GM10248 (cell line): ENCODE measurements at regions of chr1 and their contacts with region 1.

Region 1: DNA sequence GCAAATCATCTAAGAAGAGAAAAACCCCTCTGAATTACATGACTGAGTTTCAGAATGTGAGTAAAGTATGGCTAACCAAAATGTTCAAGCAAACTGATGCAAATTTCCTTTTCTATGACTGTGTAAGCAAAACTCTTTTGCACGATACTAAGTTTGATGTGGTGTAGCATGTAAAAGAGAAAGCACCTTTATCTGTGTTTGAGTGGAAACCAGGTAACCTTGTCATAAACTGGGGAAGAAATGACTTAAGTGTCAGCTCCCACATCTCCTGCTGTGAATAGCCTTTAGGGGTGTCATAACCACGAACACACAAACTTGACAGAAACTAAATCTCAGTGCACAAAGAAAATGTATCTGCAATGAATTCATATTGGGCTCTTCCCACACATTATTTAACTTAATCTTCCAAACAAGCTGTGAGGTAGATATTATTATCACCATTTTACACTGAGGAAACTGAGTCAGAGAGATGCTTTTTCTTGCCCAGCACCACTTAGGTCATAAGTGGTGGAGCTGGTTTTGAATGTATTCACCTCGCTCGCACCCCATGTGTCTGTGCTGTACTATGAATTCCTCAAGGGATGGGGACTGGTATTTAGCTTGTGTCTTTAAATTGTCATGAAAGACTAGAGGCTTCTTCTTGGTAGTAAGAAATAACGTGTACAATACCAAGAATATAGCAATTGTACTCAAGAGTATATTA is 32.9 kb upstream of the IL12RB2 start:
- DNase-seq: peak; percentile 43
- CTCF ChIP-seq: no peak

Region 2: DNA sequence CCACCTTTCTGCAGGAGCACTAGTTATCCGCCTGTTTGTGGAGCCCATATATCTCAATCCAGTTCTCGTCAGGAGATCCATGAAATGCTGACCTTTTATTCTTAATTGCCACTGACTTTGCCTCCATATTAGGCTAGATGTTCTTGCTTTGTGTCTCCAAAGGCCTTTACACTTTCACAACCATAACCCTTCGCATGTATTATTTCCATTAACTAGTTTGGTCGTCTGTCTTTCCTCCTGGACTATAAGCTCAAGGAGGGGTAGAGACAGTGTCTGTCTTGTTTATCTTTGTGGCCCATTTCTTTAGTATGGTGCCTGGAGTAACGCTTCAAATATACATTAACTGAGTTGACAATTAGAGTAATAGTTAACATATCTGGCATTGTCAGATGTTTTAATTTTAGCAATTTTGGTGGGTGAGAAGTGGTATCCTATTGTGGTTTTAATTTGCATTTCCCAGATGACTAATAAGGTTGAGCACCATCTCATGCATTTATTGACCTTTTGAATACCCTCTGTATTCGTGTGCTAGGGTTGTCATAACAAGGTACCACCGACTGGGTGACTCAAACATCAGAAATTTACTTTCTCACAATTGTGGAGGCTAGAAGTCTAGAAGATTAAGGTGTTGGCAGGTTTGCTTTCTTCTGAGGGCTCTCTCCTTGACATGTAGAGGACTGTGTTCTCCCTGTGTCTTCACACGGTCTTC is 11.2 kb after region 1 on chr1:
- CTCF ChIA-PET with region 1: interaction called, 16 read pairs
- POLR2A ChIA-PET with region 1: no interaction called
- DNase-seq: peak; percentile 14
- CTCF ChIP-seq: peak; percentile 27

Region 3: GRCh38 chr1:67367370-67368045 is 92.7 kb after region 1 on chr1:
- CTCF ChIA-PET with region 1: no interaction called
- POLR2A ChIA-PET with region 1: no interaction called
- DNase-seq: no peak
- CTCF ChIP-seq: no peak